ENCODE measurements at regions of chr1 and their contacts with region 1.

Region 1: GRCh38 chr1:31955917-31956736 is 18.0 kb upstream of the PTP4A2 start:
- DNase-seq: peak; percentile 77 to 90
- ATAC-seq: peak; percentile 79 to 87 (median 82)
- H3K4me3 ChIP-seq: peak overlapping the region; percentile 36
- H3K27ac ChIP-seq: peak overlapping the region; percentile 97
- H3K4me1 ChIP-seq: peaks cover 49% of the 10 kb centered on the region
- H3K27me3 ChIP-seq: no peaks in the 10 kb centered on the region
- CTCF ChIP-seq: peak; percentile 45

Region 2: GRCh38 chr1:31815752-31816500 is 140.2 kb before region 1 on chr1 and contains the start of gene SPOCD1:
- intact Hi-C with region 1: loop called in 1 of 2 experiments (anchors 10 kb)
- DNase-seq: peak; percentile 73 to 82
- ATAC-seq: peak; percentile 72 to 86 (median 80)
- H3K4me3 ChIP-seq: no peak within 1 kb of the TSS
- H3K27ac ChIP-seq: no peak within 1 kb of the TSS
- H3K4me1 ChIP-seq: no peaks in the 10 kb centered on the region
- H3K27me3 ChIP-seq: no peaks in the 10 kb centered on the region
- CTCF ChIP-seq: peak; percentile 40
- total RNA-seq, gene SPOCD1: 0.15 to 0.32 TPM in 2 of 4 donors, not detected in the others

Region 3: GRCh38 chr1:31926853-31927660 is 29.1 kb before region 1 on chr1:
- intact Hi-C with region 1: loop called (anchors 5 kb)
- DNase-seq: no peak
- ATAC-seq: no peak
- H3K4me3 ChIP-seq: peak overlapping the region; percentile 19
- H3K27ac ChIP-seq: peak overlapping the region; percentile 56
- H3K4me1 ChIP-seq: peaks cover 84% of the 10 kb centered on the region
- H3K27me3 ChIP-seq: no peaks in the 10 kb centered on the region
- CTCF ChIP-seq: no peak

Region 4: GRCh38 chr1:31938174-31938950 is 17.8 kb before region 1 on chr1 and contains the start of gene PTP4A2:
- intact Hi-C with region 1: loop called in 1 of 2 experiments (anchors 2 kb)
- DNase-seq: peak; percentile 95 to 97
- ATAC-seq: peak; percentile 90 to 94 (median 92)
- H3K4me3 ChIP-seq: peak within 1 kb of the TSS; percentile 70
- H3K27ac ChIP-seq: peak within 1 kb of the TSS; percentile 90
- H3K4me1 ChIP-seq: peaks cover 30% of the 10 kb centered on the region
- H3K27me3 ChIP-seq: no peaks in the 10 kb centered on the region
- CTCF ChIP-seq: peak; percentile 73
- total RNA-seq, gene PTP4A2: 290 to 532 (median 433) TPM

Region 5: GRCh38 chr1:32063261-32063681 is 107.1 kb after region 1 on chr1:
- intact Hi-C with region 1: loop called in 1 of 2 experiments (anchors 5 kb)
- DNase-seq: no peak
- ATAC-seq: peak; percentile 28 to 67 (median 59)
- H3K4me3 ChIP-seq: no peak overlapping the region
- H3K27ac ChIP-seq: peak overlapping the region; percentile 89
- H3K4me1 ChIP-seq: peaks cover 25% of the 10 kb centered on the region
- H3K27me3 ChIP-seq: no peaks in the 10 kb centered on the region
- CTCF ChIP-seq: peak; percentile 65